ENCODE measurements at regions of chr22 and their contacts with region 1.

Region 1: GRCh38 chr22:31211862-31212730 is at the start of gene LIMK2:
- DNase-seq: peak; percentile 92 to 99 (median 97)
- ATAC-seq: peak; percentile 99
- H3K4me3 ChIP-seq: peak within 1 kb of the TSS; percentile 100
- H3K4me3 Mint-ChIP-seq: peak within 1 kb of the TSS; percentile 94
- H3K27ac ChIP-seq: peak within 1 kb of the TSS; percentile 55 to 72
- H3K27ac Mint-ChIP-seq: peak within 1 kb of the TSS; percentile 75
- H3K4me1 ChIP-seq: peaks cover 45% of the 10 kb centered on the region
- H3K4me1 Mint-ChIP-seq: peaks cover 62% of the 10 kb centered on the region
- H3K27me3 ChIP-seq: no peaks in the 10 kb centered on the region
- H3K27me3 Mint-ChIP-seq: no peaks in the 10 kb centered on the region
- CTCF ChIP-seq: peak; percentile 82
- total RNA-seq, gene LIMK2: 13.1 to 14.6 TPM

Region 2: DNA sequence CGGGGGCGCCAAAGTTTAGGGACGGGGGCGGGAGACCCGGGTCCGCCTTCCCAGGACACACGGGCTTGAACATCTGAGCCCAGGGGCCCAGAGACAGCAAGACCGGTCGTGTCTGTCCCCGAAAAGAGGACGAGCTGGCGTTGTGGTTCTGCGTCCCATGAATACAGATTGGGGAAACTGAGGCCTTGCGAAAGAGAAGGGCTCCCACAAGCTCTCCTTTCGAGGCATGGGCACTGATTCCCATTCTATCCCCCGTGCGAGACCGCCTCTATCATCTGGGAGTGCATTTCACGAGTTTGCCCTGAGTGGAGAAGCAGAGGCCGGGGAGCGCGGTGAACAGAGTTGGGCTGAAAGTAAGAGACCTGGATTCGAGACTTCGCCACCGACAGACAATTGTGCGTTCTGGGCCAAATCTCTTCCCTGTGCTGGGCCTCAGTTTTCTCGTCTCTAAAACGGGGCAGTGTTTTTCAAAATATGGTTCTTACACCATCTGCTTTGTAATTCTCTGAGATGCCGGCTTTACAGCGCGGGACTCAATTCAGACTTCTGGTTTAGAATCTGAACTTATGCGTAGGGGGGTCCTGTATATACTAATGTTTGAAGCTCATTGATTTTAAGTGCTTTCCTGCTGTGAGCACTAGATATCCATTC is 51.6 kb before region 1 on chr22:
- CTCF ChIA-PET with region 1: interaction called, 4 read pairs
- POLR2A ChIA-PET with region 1: interaction called, 9 read pairs
- intact Hi-C with region 1: loop called in 1 of 2 experiments (anchors 2 kb)
- DNase-seq: peak in 8 of 14 experiments; percentile 0 to 45 (median 7)
- ATAC-seq: peak; percentile 46
- H3K4me3 ChIP-seq: peak overlapping the region; percentile 96
- H3K4me3 Mint-ChIP-seq: peak overlapping the region; percentile 100
- H3K27ac ChIP-seq: peak overlapping the region; percentile 69 to 94
- H3K27ac Mint-ChIP-seq: peak overlapping the region; percentile 89
- H3K4me1 ChIP-seq: peaks cover 23% of the 10 kb centered on the region
- H3K4me1 Mint-ChIP-seq: peaks cover 48% of the 10 kb centered on the region
- H3K27me3 ChIP-seq: no peaks in the 10 kb centered on the region
- H3K27me3 Mint-ChIP-seq: no peaks in the 10 kb centered on the region
- CTCF ChIP-seq: no peak

Region 3: DNA sequence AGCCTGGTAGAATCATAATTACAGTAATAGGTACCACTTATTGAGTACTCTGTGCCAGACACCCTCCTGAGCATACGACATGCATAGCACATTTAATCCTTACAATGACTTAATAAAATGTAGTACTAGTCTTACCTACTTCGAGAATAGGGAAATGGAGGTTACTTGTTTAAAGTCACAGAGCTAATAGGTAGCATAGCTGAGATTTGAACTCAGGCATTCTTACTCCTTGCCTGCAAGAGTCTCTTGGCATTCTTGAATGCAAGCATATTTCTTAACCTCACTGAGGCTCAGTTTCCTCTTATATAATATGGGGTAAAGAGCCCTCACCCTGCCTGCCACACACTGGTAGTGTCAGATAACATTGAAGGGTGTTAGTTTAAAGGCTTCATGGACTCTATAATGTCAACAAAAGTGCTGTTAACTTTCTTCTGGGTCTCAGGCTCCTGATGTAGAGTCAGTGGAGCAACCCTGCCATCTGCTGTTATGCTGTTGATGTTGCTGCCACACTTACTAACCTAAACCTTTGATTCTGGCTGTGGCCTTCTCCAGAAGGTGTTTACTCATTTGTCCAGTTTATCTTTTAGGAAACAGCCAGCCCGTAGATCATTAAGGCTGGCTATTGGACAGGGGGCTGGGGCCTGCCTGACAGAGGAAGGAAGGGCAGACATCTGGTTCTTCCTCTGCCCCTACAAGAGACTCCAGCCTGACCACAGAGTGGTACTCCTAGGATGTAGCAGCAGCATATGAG is 18.9 kb after region 1 on chr22:
- CTCF ChIA-PET with region 1: interaction called, 34 read pairs
- POLR2A ChIA-PET with region 1: interaction called, 49 read pairs
- intact Hi-C with region 1: loop called (anchors 1 kb)
- DNase-seq: peak; percentile 32 to 85 (median 54)
- ATAC-seq: peak; percentile 92
- H3K4me3 ChIP-seq: no peak overlapping the region
- H3K4me3 Mint-ChIP-seq: peak overlapping the region; percentile 49
- H3K27ac ChIP-seq: peak overlapping the region in 1 of 2 donors; percentile 70
- H3K27ac Mint-ChIP-seq: peak overlapping the region; percentile 90
- H3K4me1 ChIP-seq: peaks cover 28% of the 10 kb centered on the region
- H3K4me1 Mint-ChIP-seq: peaks cover 57% of the 10 kb centered on the region
- H3K27me3 ChIP-seq: no peaks in the 10 kb centered on the region
- H3K27me3 Mint-ChIP-seq: no peaks in the 10 kb centered on the region
- CTCF ChIP-seq: peak; percentile 72

Region 4: GRCh38 chr22:31278622-31279326 is 66.7 kb after region 1 on chr22:
- CTCF ChIA-PET with region 1: interaction called, 20 read pairs
- POLR2A ChIA-PET with region 1: interaction called, 29 read pairs
- intact Hi-C with region 1: loop called (anchors 2 to 5 kb)
- DNase-seq: peak in 11 of 14 experiments; percentile 48 to 87 (median 57)
- ATAC-seq: peak; percentile 73
- H3K4me3 ChIP-seq: peak overlapping the region; percentile 13
- H3K4me3 Mint-ChIP-seq: peak overlapping the region; percentile 79
- H3K27ac ChIP-seq: peak overlapping the region; percentile 75 to 85
- H3K27ac Mint-ChIP-seq: peak overlapping the region; percentile 98
- H3K4me1 ChIP-seq: peaks cover 87% of the 10 kb centered on the region
- H3K4me1 Mint-ChIP-seq: peaks cover 95% of the 10 kb centered on the region
- H3K27me3 ChIP-seq: no peaks in the 10 kb centered on the region
- H3K27me3 Mint-ChIP-seq: no peaks in the 10 kb centered on the region
- CTCF ChIP-seq: no peak